ENCODE measurements at regions of chr2 and their contacts with region 1.

Region 1: GRCh38 chr2:105749583-105750400 is 5.1 kb downstream of the NCK2 start:
- DNase-seq: no peak

Region 2: GRCh38 chr2:105576440-105577252 is 173.1 kb before region 1 on chr2:
- intact Hi-C with region 1: loop called (anchors 10 kb)
- DNase-seq: peak in 1 of 42 donors; percentile 18

Region 3: GRCh38 chr2:105617756-105618659 is 131.8 kb before region 1 on chr2:
- intact Hi-C with region 1: no loop called
- DNase-seq: no peak

Region 4: GRCh38 chr2:105691947-105692390 is 57.8 kb before region 1 on chr2:
- intact Hi-C with region 1: no loop called
- DNase-seq: no peak

Region 5: DNA sequence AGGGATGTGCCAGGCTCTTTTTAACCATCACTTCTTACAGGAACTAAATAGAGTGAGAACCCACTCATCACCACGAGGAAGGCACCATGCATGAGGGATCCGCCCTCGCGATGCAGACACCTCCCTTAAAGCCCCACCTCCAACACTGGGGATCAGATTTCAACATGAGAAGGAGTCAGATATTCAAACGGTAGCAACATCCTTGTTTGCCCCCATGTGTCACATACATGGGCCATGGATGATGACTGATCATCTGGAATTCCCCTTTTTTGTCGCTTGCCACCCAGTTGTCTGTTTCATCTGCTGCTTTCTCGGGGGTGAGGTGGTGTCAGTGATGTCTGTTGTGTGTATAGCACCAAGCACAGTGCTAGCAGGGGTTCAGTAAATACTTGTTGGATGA is 52.8 kb after region 1 on chr2:
- intact Hi-C with region 1: no loop called
- DNase-seq: peak in 12 of 42 donors; percentile 23 to 72 (median 49)

Region 6: GRCh38 chr2:105915005-105915558 is 165.3 kb after region 1 on chr2:
- intact Hi-C with region 1: no loop called
- DNase-seq: no peak